Activated CD4-positive, alpha-beta T cell treated with anti-CD3 and anti-CD28 coated beads, Interleukin-2, amount 10 ng/mL, durations not matched to agents 24 days and 14 days (primary cell): ENCODE measurements at regions of chr12 and their contacts with region 1.

Region 1: GRCh38 chr12:71242511-71242910 is 84.7 kb upstream of the TSPAN8 start:
- DNase-seq: no peak
- H3K4me3 Mint-ChIP-seq: no peak overlapping the region
- H3K27ac Mint-ChIP-seq: no peak overlapping the region
- H3K4me1 Mint-ChIP-seq: no peaks in the 10 kb centered on the region
- H3K27me3 Mint-ChIP-seq: no peaks in the 10 kb centered on the region

Region 2: DNA sequence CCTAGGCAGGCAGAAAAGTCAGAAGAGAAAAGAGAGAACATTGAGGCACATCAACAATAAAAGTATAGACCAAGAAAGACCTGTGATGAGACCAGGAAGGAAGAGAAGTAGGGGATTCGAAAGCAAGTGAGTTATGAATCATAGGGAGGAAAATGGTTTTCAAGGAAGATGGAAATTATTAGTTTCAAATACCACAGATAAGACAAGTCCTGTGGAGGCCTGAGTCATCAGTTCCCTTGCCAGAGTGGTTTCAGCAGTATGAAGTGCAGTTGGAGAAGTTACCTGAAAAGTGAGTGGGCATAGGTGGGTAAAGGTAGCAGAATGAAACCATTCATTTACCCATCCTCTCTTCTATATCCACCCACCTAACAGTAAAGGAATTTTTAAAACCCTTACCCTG is 59.5 kb before region 1 on chr12:
- intact Hi-C with region 1: loop called (anchors 10 kb)
- DNase-seq: no peak
- H3K4me3 Mint-ChIP-seq: no peak overlapping the region
- H3K27ac Mint-ChIP-seq: no peak overlapping the region
- H3K4me1 Mint-ChIP-seq: no peaks in the 10 kb centered on the region
- H3K27me3 Mint-ChIP-seq: no peaks in the 10 kb centered on the region

Region 3: GRCh38 chr12:71208053-71208685 is 34.3 kb before region 1 on chr12:
- intact Hi-C with region 1: no loop called
- DNase-seq: no peak
- H3K4me3 Mint-ChIP-seq: no peak overlapping the region
- H3K27ac Mint-ChIP-seq: no peak overlapping the region
- H3K4me1 Mint-ChIP-seq: no peaks in the 10 kb centered on the region
- H3K27me3 Mint-ChIP-seq: no peaks in the 10 kb centered on the region

Region 4: DNA sequence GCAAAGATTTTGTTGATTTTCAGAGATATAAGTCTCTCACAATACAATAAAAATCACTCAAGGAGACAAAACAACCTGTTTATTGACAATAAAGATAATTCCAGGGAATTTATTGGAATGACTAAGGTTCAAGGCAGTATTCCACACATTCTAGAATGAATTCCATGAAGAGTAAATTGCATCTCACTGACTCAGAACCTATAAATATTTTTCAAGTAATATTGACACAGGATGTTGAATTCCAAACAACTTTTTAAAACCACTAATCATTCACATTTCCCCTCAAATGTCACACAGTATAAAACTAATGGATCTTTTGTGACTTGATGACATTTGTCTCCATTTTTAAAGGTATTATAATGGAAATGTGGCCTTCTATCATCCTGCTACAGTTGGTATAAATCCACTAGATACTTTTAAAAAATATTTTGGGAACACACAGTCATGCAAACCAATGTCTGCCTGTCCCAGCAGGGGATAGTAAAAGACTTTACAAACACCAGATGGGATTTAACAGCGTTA is 155.0 kb after region 1 on chr12:
- intact Hi-C with region 1: no loop called
- DNase-seq: no peak
- H3K4me3 Mint-ChIP-seq: no peak overlapping the region
- H3K27ac Mint-ChIP-seq: no peak overlapping the region
- H3K4me1 Mint-ChIP-seq: no peaks in the 10 kb centered on the region
- H3K27me3 Mint-ChIP-seq: no peaks in the 10 kb centered on the region